Cardiac septum (tissue), 1 donor: ENCODE measurements at regions of chr5 and their contacts with region 1.

Region 1: GRCh38 chr5:149367249-149367971 is 9.6 kb downstream of the PCYOX1L start:
- DNase-seq: no peak

Region 2: DNA sequence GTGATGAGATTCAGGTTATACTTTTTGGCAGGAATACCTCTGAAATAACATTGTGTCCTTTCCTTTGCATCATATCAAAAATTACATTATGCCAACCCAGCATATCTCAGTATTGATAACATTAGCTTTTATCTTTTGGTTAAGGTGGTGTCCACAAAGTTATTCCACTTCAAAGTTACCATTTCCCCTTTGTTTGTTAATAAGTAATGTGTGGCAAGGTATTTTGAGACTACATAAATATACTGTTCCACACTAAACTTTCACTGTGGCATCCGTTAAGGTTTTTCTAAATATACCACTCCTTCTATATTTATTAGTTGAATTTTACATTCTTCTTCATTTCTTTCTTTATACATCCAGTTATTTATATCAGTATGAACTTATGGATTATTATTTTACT is 199.8 kb after region 1 on chr5:
- intact Hi-C with region 1: loop called (anchors 5 kb)
- DNase-seq: no peak